Activated naive CD4-positive, alpha-beta T cell treated with anti-CD3 and anti-CD28 coated beads for 36 hours (primary cell): ENCODE measurements at regions of chr11 and their contacts with region 1.

Region 1: GRCh38 chr11:107858217-107859070 is at the start of gene SLC35F2:
- DNase-seq: peak; percentile 77
- H3K4me3 Mint-ChIP-seq: peak within 1 kb of the TSS; percentile 95
- H3K27ac Mint-ChIP-seq: peak within 1 kb of the TSS; percentile 91
- H3K4me1 Mint-ChIP-seq: peaks cover 21% of the 10 kb centered on the region
- H3K27me3 Mint-ChIP-seq: no peaks in the 10 kb centered on the region
- total RNA-seq, gene SLC35F2: 18.2 to 20.5 TPM

Region 2: DNA sequence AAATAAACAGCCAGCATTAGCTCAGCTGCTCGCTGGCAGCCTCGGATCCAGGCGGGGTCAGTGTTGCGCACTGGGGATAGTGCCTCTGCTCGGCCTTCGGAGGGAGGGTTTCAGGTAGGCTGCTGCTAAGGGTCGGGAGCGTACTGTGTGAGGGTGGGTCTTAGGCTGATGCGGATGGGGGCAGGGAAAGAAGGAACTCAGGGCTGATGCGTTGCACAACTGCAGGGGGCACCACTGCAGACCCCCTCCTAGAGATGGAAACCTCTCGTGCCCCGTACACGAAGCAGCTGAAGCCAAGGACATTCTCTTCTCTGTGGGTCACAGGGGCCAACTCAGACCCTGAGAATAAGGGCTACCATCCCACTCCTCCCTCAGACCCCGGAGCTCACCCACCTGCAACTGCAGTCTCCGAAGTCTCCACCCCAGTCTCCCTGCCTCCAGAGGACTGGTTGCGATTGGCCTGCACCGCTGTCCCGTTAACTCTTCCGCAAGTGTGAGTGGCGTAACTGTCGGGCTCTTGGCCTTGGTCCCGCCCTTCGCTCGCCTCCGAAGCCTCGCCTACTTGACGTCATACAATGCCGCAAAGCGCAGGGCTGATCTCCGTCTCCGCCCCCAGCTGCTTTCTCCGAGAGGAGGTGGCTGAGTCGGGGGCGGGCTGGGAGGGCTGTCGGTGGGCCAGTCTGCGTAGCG is 1781.4 kb before region 1 on chr11 and contains the start of gene KBTBD3:
- CTCF ChIA-PET with region 1: no interaction called
- intact Hi-C with region 1: loop called (anchors 5 kb)
- DNase-seq: peak; percentile 98
- H3K4me3 Mint-ChIP-seq: peak within 1 kb of the TSS; percentile 91
- H3K27ac Mint-ChIP-seq: peak within 1 kb of the TSS; percentile 93
- H3K4me1 Mint-ChIP-seq: peaks cover 47% of the 10 kb centered on the region
- H3K27me3 Mint-ChIP-seq: no peaks in the 10 kb centered on the region
- total RNA-seq, gene KBTBD3: 6.6 to 7.9 TPM

Region 3: GRCh38 chr11:107438148-107438547 is 420.3 kb before region 1 on chr11:
- CTCF ChIA-PET with region 1: no interaction called
- intact Hi-C with region 1: no loop called
- DNase-seq: no peak
- H3K4me3 Mint-ChIP-seq: no peak overlapping the region
- H3K27ac Mint-ChIP-seq: no peak overlapping the region
- H3K4me1 Mint-ChIP-seq: peaks cover 9% of the 10 kb centered on the region
- H3K27me3 Mint-ChIP-seq: no peaks in the 10 kb centered on the region

Region 4: DNA sequence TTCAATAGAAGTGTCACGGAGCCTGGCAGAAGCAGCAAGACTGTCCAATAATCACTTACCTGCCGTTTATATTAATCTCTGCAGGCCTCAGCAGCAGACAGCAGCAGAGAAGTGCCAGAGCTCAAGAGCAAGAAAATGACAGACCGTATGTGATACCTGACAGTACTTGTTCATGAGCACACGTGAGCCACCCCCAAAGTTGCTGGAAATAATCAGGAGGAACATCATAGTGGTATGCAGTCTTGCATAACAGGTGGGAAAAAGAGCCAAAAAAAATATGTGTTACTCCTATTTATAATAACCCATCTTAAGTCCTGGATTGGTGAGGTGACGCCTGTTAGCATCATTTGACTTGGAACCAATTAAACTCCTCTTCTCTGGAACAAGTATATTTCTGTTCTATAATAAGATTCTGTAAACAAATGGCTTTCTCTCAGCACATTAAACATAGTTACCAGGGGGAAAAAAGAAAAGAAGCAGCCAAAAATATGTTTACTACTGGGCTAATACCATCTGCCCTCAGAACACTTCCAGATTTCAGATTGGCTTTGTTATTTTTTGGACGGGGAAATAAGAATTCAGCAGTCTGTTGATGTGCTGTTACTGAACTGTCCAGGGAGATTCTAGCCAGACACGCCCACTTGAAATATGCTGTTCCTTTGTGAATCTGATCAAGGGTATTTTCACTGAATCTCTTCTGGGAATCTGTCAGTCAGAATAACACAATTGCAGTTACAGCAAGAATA is 138.7 kb before region 1 on chr11:
- CTCF ChIA-PET with region 1: no interaction called
- intact Hi-C with region 1: no loop called
- DNase-seq: no peak
- H3K4me3 Mint-ChIP-seq: no peak overlapping the region
- H3K27ac Mint-ChIP-seq: no peak overlapping the region
- H3K4me1 Mint-ChIP-seq: no peaks in the 10 kb centered on the region
- H3K27me3 Mint-ChIP-seq: peaks cover 14% of the 10 kb centered on the region

Region 5: GRCh38 chr11:107799218-107799859 is 59.1 kb before region 1 on chr11:
- CTCF ChIA-PET with region 1: no interaction called
- intact Hi-C with region 1: loop called (anchors 1 kb)
- DNase-seq: peak; percentile 80
- H3K4me3 Mint-ChIP-seq: no peak overlapping the region
- H3K27ac Mint-ChIP-seq: no peak overlapping the region
- H3K4me1 Mint-ChIP-seq: no peaks in the 10 kb centered on the region
- H3K27me3 Mint-ChIP-seq: no peaks in the 10 kb centered on the region

Region 6: GRCh38 chr11:107818491-107818890 is 40.0 kb before region 1 on chr11:
- CTCF ChIA-PET with region 1: no interaction called
- intact Hi-C with region 1: no loop called
- DNase-seq: no peak
- H3K4me3 Mint-ChIP-seq: no peak overlapping the region
- H3K27ac Mint-ChIP-seq: no peak overlapping the region
- H3K4me1 Mint-ChIP-seq: peaks cover 7% of the 10 kb centered on the region
- H3K27me3 Mint-ChIP-seq: no peaks in the 10 kb centered on the region

Region 7: DNA sequence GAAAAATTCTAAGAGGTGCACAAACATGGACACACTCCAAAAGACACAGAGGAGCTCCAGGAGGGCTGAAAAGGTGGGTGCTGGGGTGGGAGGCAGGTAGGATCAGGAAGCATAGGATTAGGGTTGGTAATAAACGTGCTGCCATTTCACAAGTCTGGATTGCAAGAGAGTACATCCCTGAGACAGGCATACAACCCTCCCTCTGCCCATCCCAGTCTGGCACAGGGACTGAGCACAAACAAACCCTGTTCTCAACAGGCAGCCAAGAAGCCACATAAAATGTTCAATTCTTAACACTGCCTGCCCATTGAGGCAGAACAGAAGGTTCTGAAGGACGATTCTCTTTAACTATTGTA is 18.3 kb before region 1 on chr11:
- CTCF ChIA-PET with region 1: interaction called, 4 read pairs
- intact Hi-C with region 1: loop called (anchors 1 kb)
- DNase-seq: no peak
- H3K4me3 Mint-ChIP-seq: no peak overlapping the region
- H3K27ac Mint-ChIP-seq: peak overlapping the region; percentile 93
- H3K4me1 Mint-ChIP-seq: peaks cover 68% of the 10 kb centered on the region
- H3K27me3 Mint-ChIP-seq: no peaks in the 10 kb centered on the region

Region 8: GRCh38 chr11:108237058-108237481 is 378.6 kb after region 1 on chr11:
- CTCF ChIA-PET with region 1: no interaction called
- intact Hi-C with region 1: loop called (anchors 5 kb)
- DNase-seq: no peak
- H3K4me3 Mint-ChIP-seq: peak overlapping the region; percentile 64
- H3K27ac Mint-ChIP-seq: peak overlapping the region; percentile 91
- H3K4me1 Mint-ChIP-seq: peaks cover 75% of the 10 kb centered on the region
- H3K27me3 Mint-ChIP-seq: no peaks in the 10 kb centered on the region